CD4-positive, alpha-beta memory T cell (primary cell): ENCODE measurements at regions of chr20 and their contacts with region 1.

Region 1: DNA sequence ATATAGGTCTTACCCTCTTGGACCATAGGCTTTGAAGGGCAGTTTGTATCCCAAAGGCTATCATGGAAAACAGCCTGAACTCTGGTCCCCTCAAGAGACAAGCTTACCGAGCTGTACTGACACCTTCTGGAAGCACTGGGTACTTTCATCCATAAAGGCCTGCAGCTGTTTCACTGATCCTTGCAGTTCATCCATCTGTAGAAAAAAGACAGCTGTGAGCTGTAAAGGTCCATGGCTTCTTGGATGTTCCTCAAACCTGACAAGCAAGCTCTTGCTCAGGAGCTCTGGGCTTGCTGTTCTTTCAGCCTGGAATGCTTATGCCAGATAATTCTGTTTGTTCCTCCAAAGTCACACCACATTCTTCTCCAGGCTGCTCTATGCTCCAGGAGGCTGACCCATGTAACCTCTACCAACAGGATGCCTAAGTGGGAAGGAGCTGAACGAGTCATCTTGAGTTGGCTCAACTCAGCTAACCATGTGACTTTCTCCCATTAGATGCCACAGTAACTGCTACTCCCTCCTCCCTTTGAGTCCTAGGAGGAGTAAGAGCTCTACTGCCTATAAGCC is 8.8 kb upstream of the NDRG3 start:
- DNase-seq: peak; percentile 46 to 50 (median 48)
- H3K4me3 ChIP-seq: no peak overlapping the region
- H3K4me3 Mint-ChIP-seq: no peak overlapping the region
- H3K27ac ChIP-seq: no peak overlapping the region
- H3K27ac Mint-ChIP-seq: peak overlapping the region in 3 of 7 donors; percentile 13 to 55 (median 47)
- H3K4me1 ChIP-seq: no peaks in the 10 kb centered on the region
- H3K4me1 Mint-ChIP-seq: peaks cover 0 to 5% (median 3%) of the 10 kb centered on the region in 4 donors
- H3K27me3 ChIP-seq: no peaks in the 10 kb centered on the region
- H3K27me3 Mint-ChIP-seq: no peaks in the 10 kb centered on the region

Region 2: GRCh38 chr20:36562724-36563123 is 192.0 kb before region 1 on chr20:
- CTCF ChIA-PET with region 1: interaction called, 16 read pairs
- POLR2A ChIA-PET with region 1: interaction called, 4 read pairs
- intact Hi-C with region 1: no loop called
- DNase-seq: no peak
- H3K4me3 ChIP-seq: no peak overlapping the region
- H3K4me3 Mint-ChIP-seq: no peak overlapping the region
- H3K27ac ChIP-seq: no peak overlapping the region
- H3K27ac Mint-ChIP-seq: peak overlapping the region in 1 of 7 donors; percentile 3
- H3K4me1 ChIP-seq: no peaks in the 10 kb centered on the region
- H3K4me1 Mint-ChIP-seq: peaks cover 2 to 8% (median 5%) of the 10 kb centered on the region in 4 donors
- H3K27me3 ChIP-seq: no peaks in the 10 kb centered on the region
- H3K27me3 Mint-ChIP-seq: no peaks in the 10 kb centered on the region

Region 3: DNA sequence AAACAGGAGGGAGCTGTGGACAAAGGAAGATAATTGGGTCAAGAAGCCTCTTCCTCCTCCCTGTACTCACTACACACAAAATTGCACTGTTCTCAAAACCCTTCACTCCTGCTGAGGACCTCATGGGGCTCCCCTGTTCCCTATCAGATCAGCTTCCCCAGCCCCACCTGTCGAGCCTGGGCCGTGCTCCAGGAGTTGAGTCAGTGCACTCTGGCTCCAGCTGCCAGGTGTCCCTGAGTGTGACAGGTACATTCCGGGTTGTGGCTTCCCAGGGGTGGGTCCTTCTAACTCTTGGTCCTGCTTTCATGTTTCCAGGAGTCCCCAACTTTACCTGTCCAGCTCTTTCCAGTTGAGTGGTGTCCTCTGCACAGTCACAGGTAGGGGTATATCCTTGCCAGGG is 140.8 kb before region 1 on chr20:
- CTCF ChIA-PET with region 1: interaction called, 62 read pairs
- POLR2A ChIA-PET with region 1: interaction called, 4 read pairs
- intact Hi-C with region 1: loop called (anchors 1 kb)
- DNase-seq: no peak
- H3K4me3 ChIP-seq: no peak overlapping the region
- H3K4me3 Mint-ChIP-seq: no peak overlapping the region
- H3K27ac ChIP-seq: no peak overlapping the region
- H3K27ac Mint-ChIP-seq: peak overlapping the region in 6 of 7 donors; percentile 43 to 74 (median 58)
- H3K4me1 ChIP-seq: peaks cover 15% of the 10 kb centered on the region
- H3K4me1 Mint-ChIP-seq: peaks cover 8 to 15% (median 10%) of the 10 kb centered on the region in 4 donors
- H3K27me3 ChIP-seq: no peaks in the 10 kb centered on the region
- H3K27me3 Mint-ChIP-seq: no peaks in the 10 kb centered on the region

Region 4: GRCh38 chr20:36736451-36737182 is 18.1 kb before region 1 on chr20:
- CTCF ChIA-PET with region 1: interaction called, 51 read pairs
- POLR2A ChIA-PET with region 1: interaction called, 5 read pairs
- intact Hi-C with region 1: no loop called
- DNase-seq: no peak
- H3K4me3 ChIP-seq: no peak overlapping the region
- H3K4me3 Mint-ChIP-seq: no peak overlapping the region
- H3K27ac ChIP-seq: no peak overlapping the region
- H3K27ac Mint-ChIP-seq: peak overlapping the region in 4 of 7 donors; percentile 24 to 62 (median 44)
- H3K4me1 ChIP-seq: peaks cover 23% of the 10 kb centered on the region
- H3K4me1 Mint-ChIP-seq: peaks cover 22 to 52% (median 35%) of the 10 kb centered on the region in 4 donors
- H3K27me3 ChIP-seq: no peaks in the 10 kb centered on the region
- H3K27me3 Mint-ChIP-seq: no peaks in the 10 kb centered on the region